ENCODE measurements at regions of chr1 and their contacts with region 1.

Region 1: DNA sequence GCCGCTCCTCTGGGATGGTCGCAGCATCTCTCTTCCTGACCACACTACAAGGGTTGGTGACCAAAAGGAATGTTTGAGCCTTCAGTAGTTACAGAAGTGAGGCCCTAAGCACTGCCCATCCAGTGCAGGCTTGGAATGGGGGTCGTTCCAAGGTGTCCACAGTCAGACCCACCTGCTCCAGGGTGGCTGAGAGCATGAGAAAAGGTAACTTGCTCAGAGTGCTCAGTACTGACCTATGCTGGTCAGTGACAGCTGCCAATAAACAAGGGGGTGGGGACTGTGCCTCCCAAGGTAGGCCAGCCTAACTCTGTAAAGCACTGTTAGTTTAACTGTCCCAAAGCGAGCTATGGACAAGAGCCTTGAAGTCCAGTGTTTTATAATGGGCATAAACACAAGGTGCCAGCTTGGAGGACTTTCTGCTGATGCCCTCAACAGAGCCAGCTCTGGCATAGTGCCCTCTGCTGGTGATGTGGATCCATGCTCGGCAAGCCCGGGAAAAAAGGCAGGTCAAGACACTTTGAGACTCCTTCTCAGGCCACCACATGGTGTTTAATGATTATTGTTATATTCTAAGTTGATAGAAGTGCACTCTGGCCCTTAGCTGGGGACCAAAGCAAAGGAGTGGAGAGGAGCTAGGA is 78.1 kb upstream of the DNAH14 start:
- DNase-seq: peak; percentile 72
- CTCF ChIP-seq: peak; percentile 79

Region 2: DNA sequence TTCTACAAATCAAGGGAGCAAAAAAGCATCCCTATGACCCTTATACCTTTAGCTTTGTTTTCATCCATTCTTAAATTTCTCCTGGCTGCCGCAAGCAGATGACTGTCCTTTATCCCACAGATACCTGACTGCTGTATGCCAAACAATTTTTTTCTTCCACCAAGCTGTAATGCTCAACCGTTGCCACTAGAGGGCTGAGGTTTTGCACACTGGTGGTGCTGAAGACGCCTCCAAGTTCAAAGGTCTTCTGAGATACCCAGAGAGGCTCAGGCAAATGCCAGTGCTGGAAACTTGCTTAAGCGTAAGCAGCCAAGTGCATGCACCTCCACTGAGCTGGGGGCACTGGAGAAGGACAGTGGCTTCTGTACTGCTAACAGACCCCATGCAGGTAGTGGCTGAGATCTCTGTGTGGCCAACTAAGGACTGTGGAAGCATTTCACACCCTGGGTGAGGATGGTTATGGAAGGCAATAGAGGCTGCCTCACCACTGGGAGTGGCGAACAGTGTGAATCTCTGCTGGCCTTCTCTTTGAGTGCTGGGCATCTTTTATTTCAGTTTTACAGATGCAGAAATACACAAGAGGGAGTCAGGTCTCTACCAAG is 206.7 kb before region 1 on chr1:
- CTCF ChIA-PET with region 1: interaction called, 101 read pairs
- POLR2A ChIA-PET with region 1: no interaction called
- DNase-seq: peak; percentile 75
- CTCF ChIP-seq: peak; percentile 91

Region 3: GRCh38 chr1:224687465-224687864 is 163.9 kb before region 1 on chr1:
- CTCF ChIA-PET with region 1: interaction called, 12 read pairs
- POLR2A ChIA-PET with region 1: no interaction called
- DNase-seq: no peak
- CTCF ChIP-seq: no peak

Region 4: DNA sequence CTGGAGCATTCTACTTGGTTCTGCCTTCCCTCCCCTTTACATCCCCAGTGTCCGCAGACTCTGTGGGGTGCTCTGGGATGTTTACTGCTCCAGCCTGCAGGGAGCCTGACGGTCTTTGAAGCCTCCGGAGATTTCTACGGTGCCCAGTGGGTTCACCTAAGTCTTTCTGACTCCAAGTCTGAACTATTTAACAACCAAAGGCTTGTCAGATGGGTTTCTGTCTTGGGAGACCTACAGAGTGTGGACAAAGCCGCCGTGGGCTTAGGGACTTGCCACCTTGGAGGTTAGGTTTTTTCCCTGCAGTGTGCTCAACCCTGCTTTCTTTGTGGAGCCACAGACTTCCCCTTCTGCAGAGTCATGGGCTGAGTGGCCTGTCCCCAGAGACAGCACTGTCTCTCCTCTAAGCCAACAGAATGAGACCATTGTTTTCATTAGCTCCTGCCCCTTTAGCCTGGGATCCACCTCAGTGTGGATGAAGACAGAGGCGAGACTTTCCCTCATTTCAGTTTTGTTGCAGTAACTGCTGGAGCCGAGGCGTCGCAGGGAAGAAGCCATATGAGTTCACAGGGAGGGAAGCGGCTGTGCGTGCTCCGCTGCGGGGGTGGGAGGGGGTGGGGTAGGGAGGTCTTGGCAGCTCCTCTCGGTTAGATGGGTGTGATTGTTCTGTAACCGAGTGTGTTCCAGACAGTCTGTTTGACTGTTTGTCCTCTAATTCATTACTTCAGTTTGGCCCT is 114.5 kb before region 1 on chr1:
- CTCF ChIA-PET with region 1: interaction called, 13 read pairs
- POLR2A ChIA-PET with region 1: no interaction called
- DNase-seq: peak; percentile 70
- CTCF ChIP-seq: no peak

Region 5: DNA sequence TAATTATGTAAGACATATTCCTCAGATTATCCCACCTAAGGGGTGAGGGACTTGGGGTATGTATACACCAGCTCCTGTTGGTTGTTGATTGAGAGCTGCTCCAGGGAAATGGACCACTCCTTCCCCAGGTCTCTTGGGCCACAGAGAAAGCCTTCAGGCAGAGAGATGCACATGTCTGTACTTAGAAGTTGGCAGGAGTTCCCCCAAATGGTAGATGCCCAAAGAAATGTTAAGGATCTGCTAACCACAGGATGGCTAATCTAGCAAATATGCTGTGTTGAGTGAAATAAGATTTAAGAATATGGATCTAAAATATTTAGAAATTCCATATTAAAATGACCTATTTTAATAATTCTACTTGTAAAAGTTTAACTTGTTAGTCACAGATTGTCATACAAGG is 22.6 kb before region 1 on chr1:
- CTCF ChIA-PET with region 1: interaction called, 21 read pairs
- POLR2A ChIA-PET with region 1: no interaction called
- DNase-seq: no peak
- CTCF ChIP-seq: no peak

Region 6: GRCh38 chr1:225044258-225044657 is 192.9 kb after region 1 on chr1:
- CTCF ChIA-PET with region 1: no interaction called
- POLR2A ChIA-PET with region 1: no interaction called
- DNase-seq: no peak
- CTCF ChIP-seq: no peak